Colonic mucosa (tissue), 4 donors: ENCODE measurements at regions of chr18 and their contacts with region 1.

Region 1: DNA sequence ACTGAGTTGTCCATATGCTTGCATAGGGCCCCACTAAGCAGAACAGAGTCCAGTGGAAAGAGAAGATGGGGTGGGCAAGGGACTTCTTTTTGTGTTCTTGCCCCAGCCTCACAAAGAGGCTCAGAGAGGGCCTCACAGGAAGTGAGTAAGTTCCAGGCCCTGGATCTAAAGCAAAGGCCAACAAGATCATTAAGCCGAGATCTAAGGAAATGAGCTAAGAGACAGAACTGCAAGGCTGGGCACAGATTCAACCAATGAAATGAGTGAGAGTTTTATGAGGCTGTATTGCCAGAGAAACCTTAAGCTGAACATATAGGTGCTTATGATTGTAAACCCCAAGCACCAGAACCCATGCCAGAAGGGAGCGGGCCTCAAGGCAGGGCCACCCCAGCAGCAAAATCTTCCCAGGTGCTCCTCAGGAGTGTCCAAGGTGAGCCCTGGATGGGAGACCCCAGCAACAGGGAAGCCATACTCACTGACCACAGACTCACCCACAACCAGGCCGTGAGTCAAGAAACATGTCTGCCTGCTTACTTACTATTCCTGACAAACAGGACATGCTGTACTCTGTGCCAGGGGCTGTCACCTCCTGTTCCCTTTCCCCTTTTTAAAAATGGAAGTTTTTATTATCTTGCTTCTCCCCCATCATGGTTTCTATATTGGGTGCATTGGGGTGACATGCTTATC is 40.2 kb downstream of the SLC14A1 start:
- DNase-seq: no peak
- H3K4me3 ChIP-seq: no peak overlapping the region
- H3K27ac ChIP-seq: no peak overlapping the region
- H3K4me1 ChIP-seq: no peaks in the 10 kb centered on the region
- H3K27me3 ChIP-seq: no peaks in the 10 kb centered on the region
- CTCF ChIP-seq: no peak

Region 2: GRCh38 chr18:45715341-45715740 is 48.8 kb before region 1 on chr18:
- intact Hi-C with region 1: loop called (anchors 10 kb)
- DNase-seq: no peak
- H3K4me3 ChIP-seq: no peak overlapping the region
- H3K27ac ChIP-seq: no peak overlapping the region
- H3K4me1 ChIP-seq: no peaks in the 10 kb centered on the region
- H3K27me3 ChIP-seq: no peaks in the 10 kb centered on the region
- CTCF ChIP-seq: no peak